ENCODE measurements at regions of chr1 and their contacts with region 1.

Region 1: GRCh38 chr1:176206961-176207902 is at the start of gene COP1:
- DNase-seq: peak; percentile 99
- H3K4me3 Mint-ChIP-seq: peak within 1 kb of the TSS; percentile 97
- H3K27ac Mint-ChIP-seq: peak within 1 kb of the TSS; percentile 97
- H3K4me1 Mint-ChIP-seq: peaks cover 22% of the 10 kb centered on the region
- H3K27me3 Mint-ChIP-seq: peaks cover 1% of the 10 kb centered on the region
- total RNA-seq, gene COP1: 48.6 and 51.4 TPM in 2 replicates

Region 2: GRCh38 chr1:175023043-175023921 is 1184.0 kb before region 1 on chr1 and contains the start of gene MRPS14:
- intact Hi-C with region 1: loop called (anchors 2 kb)
- DNase-seq: peak; percentile 99
- H3K4me3 Mint-ChIP-seq: peak within 1 kb of the TSS; percentile 91
- H3K27ac Mint-ChIP-seq: peak within 1 kb of the TSS; percentile 90
- H3K4me1 Mint-ChIP-seq: peaks cover 23% of the 10 kb centered on the region
- H3K27me3 Mint-ChIP-seq: no peaks in the 10 kb centered on the region
- total RNA-seq, gene MRPS14: 28.9 and 33.5 TPM in 2 replicates

Region 3: GRCh38 chr1:176119549-176119948 is 87.7 kb before region 1 on chr1:
- intact Hi-C with region 1: loop called (anchors 10 kb)
- DNase-seq: no peak
- H3K4me3 Mint-ChIP-seq: no peak overlapping the region
- H3K27ac Mint-ChIP-seq: no peak overlapping the region
- H3K4me1 Mint-ChIP-seq: no peaks in the 10 kb centered on the region
- H3K27me3 Mint-ChIP-seq: no peaks in the 10 kb centered on the region

Region 4: GRCh38 chr1:176159993-176160392 is 47.2 kb before region 1 on chr1:
- intact Hi-C with region 1: loop called (anchors 1 kb)
- DNase-seq: no peak
- H3K4me3 Mint-ChIP-seq: peak overlapping the region; percentile 17
- H3K27ac Mint-ChIP-seq: peak overlapping the region; percentile 85
- H3K4me1 Mint-ChIP-seq: peaks cover 26% of the 10 kb centered on the region
- H3K27me3 Mint-ChIP-seq: no peaks in the 10 kb centered on the region

Region 5: GRCh38 chr1:176177764-176178163 is 29.5 kb before region 1 on chr1:
- intact Hi-C with region 1: loop called (anchors 2 kb)
- DNase-seq: no peak
- H3K4me3 Mint-ChIP-seq: peak overlapping the region; percentile 19
- H3K27ac Mint-ChIP-seq: peak overlapping the region; percentile 79
- H3K4me1 Mint-ChIP-seq: peaks cover 37% of the 10 kb centered on the region
- H3K27me3 Mint-ChIP-seq: no peaks in the 10 kb centered on the region

Region 6: DNA sequence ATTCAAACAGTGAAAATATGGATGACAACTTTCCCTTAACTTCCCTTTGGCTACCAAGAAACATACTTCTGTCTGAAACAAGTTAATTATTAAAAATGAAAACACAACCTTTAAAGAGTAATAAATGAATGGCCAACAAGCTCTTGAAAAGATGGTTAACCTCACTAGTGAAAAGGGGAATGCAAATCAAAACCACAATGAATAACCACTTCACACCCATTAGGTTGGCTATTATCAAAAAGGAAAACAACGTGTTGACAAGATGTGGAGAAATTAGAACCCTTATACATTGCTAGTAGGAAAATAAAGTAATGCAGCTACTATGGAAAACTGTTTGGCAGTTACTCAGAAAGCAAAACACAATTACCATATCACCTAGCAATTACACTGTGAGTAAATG is 14.2 kb before region 1 on chr1:
- intact Hi-C with region 1: loop called (anchors 2 kb)
- DNase-seq: no peak
- H3K4me3 Mint-ChIP-seq: no peak overlapping the region
- H3K27ac Mint-ChIP-seq: peak overlapping the region; percentile 2
- H3K4me1 Mint-ChIP-seq: peaks cover 37% of the 10 kb centered on the region
- H3K27me3 Mint-ChIP-seq: no peaks in the 10 kb centered on the region